ENCODE measurements at regions of chr20 and their contacts with region 1.

Region 1: DNA sequence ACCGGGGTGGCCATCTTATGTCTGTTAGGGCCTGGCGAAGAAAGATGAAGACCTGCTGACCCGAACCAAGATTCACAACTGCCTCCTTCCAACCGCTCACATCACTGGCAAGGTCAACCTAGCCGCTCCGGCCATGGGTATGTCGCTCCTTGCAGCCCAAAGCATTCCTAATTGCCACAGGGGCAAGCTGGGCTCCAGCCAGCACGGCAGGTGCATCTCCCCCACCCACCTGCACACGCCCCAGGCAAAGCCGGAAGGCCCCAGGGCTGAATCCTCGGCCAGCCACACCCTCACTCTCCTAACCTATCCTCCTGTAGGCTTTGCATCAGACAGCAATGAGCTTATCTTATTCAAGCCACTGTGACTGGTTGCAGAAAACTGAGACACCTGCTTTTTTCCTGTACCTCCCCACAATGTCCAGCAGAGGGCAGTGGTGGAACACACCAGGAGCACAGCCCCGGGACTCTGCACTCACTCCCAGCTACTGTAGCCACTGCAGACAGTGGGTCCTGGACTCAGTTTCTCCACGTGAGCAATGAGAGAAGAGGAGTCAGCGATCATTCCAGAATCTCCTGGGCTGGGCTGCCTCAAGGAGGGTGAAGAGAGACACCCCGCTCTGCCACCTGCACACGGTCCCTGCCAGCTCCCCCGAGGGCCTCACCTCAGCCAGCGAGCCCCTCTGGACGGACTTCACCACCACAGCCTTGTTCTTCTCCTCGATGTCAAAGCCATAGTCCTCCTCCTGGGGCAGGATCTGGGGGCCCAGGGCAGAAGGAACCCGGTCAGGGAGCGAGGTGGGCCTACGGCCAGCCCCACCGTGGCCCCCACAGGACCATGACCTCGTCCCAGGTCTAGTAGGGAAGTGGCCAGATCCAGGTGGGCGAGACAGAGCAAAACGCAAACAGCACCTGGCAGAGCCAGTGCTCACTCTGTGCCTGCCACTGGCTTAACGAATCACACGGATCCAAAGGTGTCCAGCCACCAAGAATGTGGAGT is 170.0 kb downstream of the PREX1 start:
- DNase-seq: peak; percentile 84
- ATAC-seq: peak; percentile 84
- H3K4me3 ChIP-seq: no peak overlapping the region
- H3K27ac ChIP-seq: no peak overlapping the region
- H3K4me1 ChIP-seq: no peaks in the 10 kb centered on the region
- H3K27me3 ChIP-seq: peaks cover 0 to 28% of the 10 kb centered on the region in 2 experiments; a peak in 2 of 5 replicates
- CTCF ChIP-seq: peak; percentile 99
- EP300 ChIP-seq: no peak
- POLR2A ChIP-seq: no peak
- RAD21 ChIP-seq: peak; percentile 99

Region 2: GRCh38 chr20:48685861-48686771 is 28.3 kb after region 1 on chr20:
- CTCF ChIA-PET with region 1: no interaction called
- POLR2A ChIA-PET with region 1: no interaction called
- in situ Hi-C with region 1: no loop called
- intact Hi-C with region 1: loop called (anchors 1 kb)
- DNase-seq: no peak
- ATAC-seq: no peak
- H3K4me3 ChIP-seq: no peak overlapping the region
- H3K27ac ChIP-seq: no peak overlapping the region
- H3K4me1 ChIP-seq: peaks cover 17% of the 10 kb centered on the region
- H3K27me3 ChIP-seq: peaks cover 5 to 52% of the 10 kb centered on the region in 2 experiments; a peak in 4 of 5 replicates
- CTCF ChIP-seq: no peak
- EP300 ChIP-seq: no peak
- POLR2A ChIP-seq: no peak
- RAD21 ChIP-seq: no peak

Region 3: DNA sequence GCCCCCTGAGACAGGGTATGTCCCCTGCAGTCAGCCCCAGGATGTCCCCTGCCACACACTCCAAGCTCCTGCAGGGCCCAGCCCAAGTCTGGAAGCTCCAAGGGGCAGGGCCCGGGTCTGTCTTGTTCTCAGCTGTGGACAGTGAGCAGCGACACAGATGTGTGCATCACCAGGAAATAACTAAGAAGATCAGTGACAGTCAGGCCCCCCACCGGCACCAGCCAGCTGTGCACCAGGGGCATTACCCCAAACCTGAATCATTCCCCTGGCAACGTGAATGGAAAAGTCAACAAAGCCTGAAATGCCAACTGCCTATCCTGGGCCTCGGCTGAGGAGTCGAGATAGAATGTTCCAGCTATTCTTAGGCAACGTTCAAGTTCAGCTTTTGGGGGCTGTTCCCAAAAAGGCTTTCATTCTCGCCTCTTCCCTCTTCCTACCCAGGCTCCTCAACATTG is 65.0 kb after region 1 on chr20:
- CTCF ChIA-PET with region 1: interaction called, 29 read pairs
- POLR2A ChIA-PET with region 1: interaction called, 3 read pairs
- in situ Hi-C with region 1: loop called (anchors 5 kb)
- intact Hi-C with region 1: loop called (anchors 1 kb)
- DNase-seq: peak; percentile 34
- ATAC-seq: peak; percentile 59
- H3K4me3 ChIP-seq: peak overlapping the region in 2 of 3 experiments; percentile 26 to 69; a peak in 4 of 6 replicates
- H3K27ac ChIP-seq: no peak overlapping the region
- H3K4me1 ChIP-seq: peaks cover 34% of the 10 kb centered on the region
- H3K27me3 ChIP-seq: peaks cover 1 to 8% of the 10 kb centered on the region in 2 experiments; a peak in 2 of 5 replicates
- CTCF ChIP-seq: no peak
- EP300 ChIP-seq: no peak
- POLR2A ChIP-seq: no peak
- RAD21 ChIP-seq: no peak

Region 4: DNA sequence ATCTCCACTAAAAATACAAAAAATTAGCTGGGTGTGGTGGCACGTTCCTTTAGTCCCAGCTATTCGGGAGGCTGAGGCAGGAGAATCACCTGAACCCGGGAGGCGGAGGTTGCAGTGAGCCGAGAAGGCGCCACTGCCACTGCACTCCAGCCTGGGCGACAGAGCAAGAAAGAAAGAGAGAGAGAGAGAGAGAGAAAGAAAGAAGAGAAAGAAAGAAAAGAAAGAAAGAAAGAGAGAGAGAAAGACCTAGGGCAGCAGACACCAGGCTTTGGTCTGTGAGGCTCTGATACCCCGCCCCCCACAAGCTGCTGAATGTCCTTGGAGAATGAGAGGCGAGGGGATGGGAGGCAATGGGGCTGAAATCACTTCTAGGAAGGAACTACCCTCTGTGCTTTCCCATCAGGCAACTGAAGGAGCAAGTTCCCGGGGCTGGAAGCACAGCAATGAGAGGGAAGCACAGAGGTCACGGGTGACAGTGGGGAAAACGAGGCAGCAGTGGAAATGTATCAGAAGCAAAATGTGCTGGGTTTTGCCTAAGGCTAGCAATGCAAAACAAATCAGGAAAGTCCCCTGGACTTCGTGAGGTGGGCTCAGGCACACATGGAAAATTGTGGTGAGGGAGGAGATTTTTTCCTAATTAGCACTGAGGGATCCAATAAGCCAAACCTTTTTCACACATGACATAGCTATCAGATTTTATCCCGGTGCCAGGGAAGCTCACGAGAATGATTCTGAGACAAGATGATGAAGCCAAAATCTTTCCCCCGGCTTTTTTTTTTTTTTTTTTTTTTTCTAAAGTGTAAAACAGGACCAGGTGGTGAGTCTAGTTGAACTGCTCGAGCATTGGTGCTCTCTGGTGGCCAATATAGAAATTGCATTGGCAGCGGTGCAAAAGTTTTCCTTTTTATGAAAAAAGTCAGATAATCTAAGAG is 246.9 kb after region 1 on chr20:
- CTCF ChIA-PET with region 1: interaction called, 173 read pairs
- POLR2A ChIA-PET with region 1: no interaction called
- in situ Hi-C with region 1: loop called (anchors 5 kb)
- intact Hi-C with region 1: loop called (anchors 1 kb)
- DNase-seq: peak; percentile 64
- ATAC-seq: peak; percentile 57
- H3K4me3 ChIP-seq: no peak overlapping the region
- H3K27ac ChIP-seq: no peak overlapping the region
- H3K4me1 ChIP-seq: no peaks in the 10 kb centered on the region
- H3K27me3 ChIP-seq: peaks cover 2 to 18% of the 10 kb centered on the region in 2 experiments; a peak in 2 of 5 replicates
- CTCF ChIP-seq: peak; percentile 75
- EP300 ChIP-seq: no peak
- POLR2A ChIP-seq: no peak
- RAD21 ChIP-seq: peak; percentile 84

Measured in HepG2 (cell line).